Heart left ventricle (tissue), 16 donors: ENCODE measurements at regions of chr6 and their contacts with region 1.

Region 1: DNA sequence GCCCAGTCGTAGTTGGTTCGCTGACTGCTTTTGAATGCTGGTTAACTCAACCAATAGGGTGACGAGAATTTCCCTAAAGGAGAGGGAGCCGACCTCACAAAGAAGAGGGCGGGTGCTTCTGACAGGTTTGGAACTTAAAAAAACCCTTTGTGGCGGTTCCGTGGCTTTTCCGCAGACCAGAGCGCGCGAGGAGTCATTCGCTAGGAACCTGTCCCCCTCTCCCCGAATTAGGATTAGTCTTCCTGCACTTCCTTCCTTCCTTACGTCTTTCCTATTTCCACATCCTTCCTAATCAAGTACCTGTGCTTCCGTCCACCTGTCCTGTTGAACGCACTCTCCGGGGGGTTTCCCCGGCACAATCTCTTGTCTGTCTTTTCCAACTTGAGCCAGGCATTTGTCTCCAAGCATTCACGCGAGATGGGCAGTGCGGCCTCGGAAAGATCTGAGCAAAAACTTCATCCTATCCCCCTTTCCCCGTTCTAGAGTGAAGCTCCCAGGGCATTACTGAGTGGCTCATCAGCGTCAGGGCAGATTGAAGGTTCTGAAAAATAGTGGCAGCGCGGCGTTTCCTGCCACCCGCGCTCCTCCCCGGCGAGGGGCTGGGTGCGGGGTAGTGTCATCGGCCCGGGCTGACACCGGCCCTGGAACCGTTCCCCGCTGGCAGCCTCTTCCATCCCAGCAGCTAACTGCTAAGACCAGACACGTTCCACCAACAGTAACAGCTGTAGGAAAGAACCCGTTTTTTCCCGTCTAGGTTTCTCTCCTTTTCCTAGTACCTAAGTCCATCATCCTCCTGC is 1.5 kb upstream of the STXBP5 start:
- DNase-seq: peak; percentile 78 to 91 (median 87)
- ATAC-seq: peak; percentile 91 to 97 (median 94)
- H3K4me3 ChIP-seq: peak overlapping the region; percentile 80 to 94 (median 84)
- H3K27ac ChIP-seq: peak overlapping the region; percentile 89 to 97 (median 94)
- H3K4me1 ChIP-seq: peaks cover 0 to 38% (median 8%) of the 10 kb centered on the region in 12 donors
- H3K27me3 ChIP-seq: no peaks in the 10 kb centered on the region
- CTCF ChIP-seq: no peak
- POLR2A ChIP-seq: peak in 1 of 2 donors; percentile 78

Region 2: DNA sequence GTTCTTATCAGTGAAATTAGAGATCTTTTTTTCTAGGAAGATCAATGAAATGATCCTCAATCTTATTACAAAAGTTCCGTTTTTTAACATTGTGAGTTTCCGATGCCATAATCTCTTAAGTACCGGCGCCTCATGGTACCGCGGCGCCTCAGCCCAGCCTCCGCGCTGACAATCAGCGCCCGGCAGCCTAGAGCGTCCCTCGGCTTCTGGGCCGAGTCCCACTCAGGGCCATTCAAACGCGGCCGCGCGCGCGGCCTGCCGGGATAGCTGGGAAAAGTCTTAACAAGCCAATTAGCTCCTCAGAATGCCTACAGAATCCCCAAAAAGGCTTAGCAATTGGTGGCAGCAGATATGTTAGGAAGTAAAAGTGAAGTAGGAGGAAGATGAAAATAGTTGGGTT is 399.1 kb before region 1 on chr6:
- intact Hi-C with region 1: no loop called
- DNase-seq: peak in 3 of 5 donors; percentile 28 to 56 (median 33)
- ATAC-seq: peak in 3 of 4 donors; percentile 67 to 84 (median 80)
- H3K4me3 ChIP-seq: peak overlapping the region in 4 of 12 donors; percentile 12 to 33 (median 26)
- H3K27ac ChIP-seq: no peak overlapping the region
- H3K4me1 ChIP-seq: no peaks in the 10 kb centered on the region
- H3K27me3 ChIP-seq: no peaks in the 10 kb centered on the region
- CTCF ChIP-seq: no peak
- POLR2A ChIP-seq: no peak

Region 3: GRCh38 chr6:146857180-146857979 is 345.3 kb before region 1 on chr6:
- intact Hi-C with region 1: loop called in 2 of 10 experiments (anchors 10 kb)
- DNase-seq: peak; percentile 81 to 93 (median 87)
- ATAC-seq: peak; percentile 95 to 99 (median 96)
- H3K4me3 ChIP-seq: peak overlapping the region in 10 of 12 donors; percentile 23 to 60 (median 46)
- H3K27ac ChIP-seq: peak overlapping the region in 11 of 12 donors; percentile 9 to 73 (median 55)
- H3K4me1 ChIP-seq: peaks cover 0 to 9% (median 0%) of the 10 kb centered on the region in 12 donors
- H3K27me3 ChIP-seq: no peaks in the 10 kb centered on the region
- CTCF ChIP-seq: peak; percentile 94 to 100 (median 98)
- POLR2A ChIP-seq: no peak

Region 4: GRCh38 chr6:146913842-146914488 is 288.7 kb before region 1 on chr6:
- intact Hi-C with region 1: loop called in 4 of 10 experiments (anchors 2 to 10 kb)
- DNase-seq: peak; percentile 43 to 82 (median 59)
- ATAC-seq: peak; percentile 82 to 96 (median 90)
- H3K4me3 ChIP-seq: peak overlapping the region in 9 of 12 donors; percentile 13 to 45 (median 29)
- H3K27ac ChIP-seq: peak overlapping the region; percentile 48 to 88 (median 68)
- H3K4me1 ChIP-seq: peaks cover 0 to 34% (median 11%) of the 10 kb centered on the region in 12 donors
- H3K27me3 ChIP-seq: no peaks in the 10 kb centered on the region
- CTCF ChIP-seq: no peak
- POLR2A ChIP-seq: no peak

Region 5: GRCh38 chr6:147135211-147135681 is 67.5 kb before region 1 on chr6:
- intact Hi-C with region 1: loop called in 3 of 10 experiments (anchors 5 to 10 kb)
- DNase-seq: peak in 1 of 5 donors; percentile 24
- ATAC-seq: peak in 1 of 4 donors; percentile 67
- H3K4me3 ChIP-seq: no peak overlapping the region
- H3K27ac ChIP-seq: no peak overlapping the region
- H3K4me1 ChIP-seq: peaks cover 0 to 14% (median 0%) of the 10 kb centered on the region in 12 donors
- H3K27me3 ChIP-seq: no peaks in the 10 kb centered on the region
- CTCF ChIP-seq: no peak
- POLR2A ChIP-seq: no peak

Region 6: GRCh38 chr6:147166360-147166944 is 36.3 kb before region 1 on chr6:
- intact Hi-C with region 1: no loop called
- DNase-seq: no peak
- ATAC-seq: no peak
- H3K4me3 ChIP-seq: no peak overlapping the region
- H3K27ac ChIP-seq: no peak overlapping the region
- H3K4me1 ChIP-seq: no peaks in the 10 kb centered on the region
- H3K27me3 ChIP-seq: no peaks in the 10 kb centered on the region
- CTCF ChIP-seq: no peak
- POLR2A ChIP-seq: no peak

Region 7: GRCh38 chr6:147268254-147268653 is 65.5 kb after region 1 on chr6:
- intact Hi-C with region 1: loop called in 1 of 10 experiments (anchors 10 kb)
- DNase-seq: no peak
- ATAC-seq: no peak
- H3K4me3 ChIP-seq: no peak overlapping the region
- H3K27ac ChIP-seq: no peak overlapping the region
- H3K4me1 ChIP-seq: no peaks in the 10 kb centered on the region
- H3K27me3 ChIP-seq: no peaks in the 10 kb centered on the region
- CTCF ChIP-seq: no peak
- POLR2A ChIP-seq: no peak

Region 8: DNA sequence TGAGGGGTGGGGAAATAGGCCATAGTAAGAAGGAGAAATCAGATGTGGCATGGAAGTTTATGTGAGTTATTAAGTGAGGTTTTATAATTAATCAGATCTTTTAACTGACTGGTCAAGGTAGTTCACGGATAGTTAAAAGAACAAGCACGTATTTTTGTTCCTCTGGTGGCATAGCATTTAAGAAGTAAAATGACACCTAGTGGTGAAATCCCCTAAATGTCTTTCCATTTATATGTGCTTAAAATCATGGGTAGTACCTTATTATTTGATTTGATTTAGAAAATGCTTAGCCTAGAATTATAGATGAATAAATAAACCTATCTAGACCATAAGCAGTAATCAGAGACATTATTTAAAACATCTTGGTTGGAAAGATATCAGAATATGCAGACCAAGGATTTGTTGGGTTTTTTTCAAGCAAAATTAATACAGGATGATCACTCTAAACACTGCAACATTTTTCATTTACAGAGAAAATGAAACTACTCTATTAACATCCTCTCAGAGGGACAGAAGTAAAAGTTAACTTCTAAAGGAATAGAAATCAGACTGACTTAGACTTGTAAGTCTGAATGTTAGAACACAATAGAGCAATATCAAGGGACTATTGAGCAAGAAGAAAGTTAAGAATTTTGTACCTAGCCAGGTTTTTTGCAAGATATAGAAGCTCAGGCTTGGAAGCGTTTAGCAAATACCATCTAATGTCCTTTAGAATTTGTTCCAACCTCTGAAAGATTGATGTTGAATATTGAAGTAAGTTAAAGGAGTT is 82.6 kb after region 1 on chr6:
- intact Hi-C with region 1: loop called in 1 of 10 experiments (anchors 10 kb)
- DNase-seq: no peak
- ATAC-seq: peak in 1 of 4 donors; percentile 65
- H3K4me3 ChIP-seq: no peak overlapping the region
- H3K27ac ChIP-seq: peak overlapping the region in 1 of 12 donors; percentile 9
- H3K4me1 ChIP-seq: peaks cover 0 to 24% (median 0%) of the 10 kb centered on the region in 12 donors
- H3K27me3 ChIP-seq: no peaks in the 10 kb centered on the region
- CTCF ChIP-seq: peak; percentile 40 to 71 (median 56)
- POLR2A ChIP-seq: no peak